ENCODE measurements at regions of chr16 and their contacts with region 1.

Region 1: DNA sequence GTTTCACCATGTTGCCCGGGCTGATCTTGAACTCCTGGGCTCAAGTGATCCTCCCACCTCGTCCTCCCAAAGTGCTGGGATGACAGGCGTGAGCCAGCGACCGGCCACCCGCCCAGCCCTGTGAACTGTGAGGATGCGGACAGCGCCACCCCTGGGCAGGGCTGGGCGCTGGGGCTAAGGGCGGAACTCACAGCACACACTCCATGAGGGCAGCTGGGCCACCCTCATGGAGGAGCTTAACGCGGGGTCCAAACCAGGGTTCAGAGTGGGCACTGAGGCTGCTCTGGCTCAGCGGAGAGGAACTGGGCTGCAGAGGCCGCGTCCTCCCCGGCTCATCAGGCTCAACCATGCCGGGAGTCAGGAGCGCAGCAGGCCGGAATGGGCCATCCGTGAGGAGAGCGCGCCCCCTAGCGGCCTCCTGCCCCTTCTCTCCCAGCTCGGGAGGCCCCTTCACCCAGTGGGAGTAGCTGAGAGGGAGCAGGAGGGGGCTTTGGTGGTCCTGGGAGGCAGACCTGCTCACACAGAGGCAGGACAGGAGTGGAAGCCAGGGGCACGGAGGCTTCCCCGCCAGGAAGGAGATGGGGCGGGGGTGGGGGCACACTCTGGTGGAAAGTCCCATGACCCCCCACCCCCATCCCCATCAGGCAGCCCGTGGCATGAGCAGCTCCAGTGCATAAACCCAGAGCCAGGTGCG is 13.8 kb downstream of the CORO7 start:
- DNase-seq: peak in 1 of 2 experiments; percentile 97
- H3K4me3 ChIP-seq: no peak overlapping the region
- H3K27ac ChIP-seq: no peak overlapping the region
- H3K4me1 ChIP-seq: peaks cover 0 to 4% (median 2%) of the 10 kb centered on the region in 4 experiments; a peak in 3 of 7 replicates
- H3K27me3 ChIP-seq: no peaks in the 10 kb centered on the region
- CTCF ChIP-seq: peak; percentile 91 to 97 (median 91)
- EP300 ChIP-seq: no peak
- POLR2A ChIP-seq: no peak
- RAD21 ChIP-seq: peak; percentile 97 to 98

Region 2: DNA sequence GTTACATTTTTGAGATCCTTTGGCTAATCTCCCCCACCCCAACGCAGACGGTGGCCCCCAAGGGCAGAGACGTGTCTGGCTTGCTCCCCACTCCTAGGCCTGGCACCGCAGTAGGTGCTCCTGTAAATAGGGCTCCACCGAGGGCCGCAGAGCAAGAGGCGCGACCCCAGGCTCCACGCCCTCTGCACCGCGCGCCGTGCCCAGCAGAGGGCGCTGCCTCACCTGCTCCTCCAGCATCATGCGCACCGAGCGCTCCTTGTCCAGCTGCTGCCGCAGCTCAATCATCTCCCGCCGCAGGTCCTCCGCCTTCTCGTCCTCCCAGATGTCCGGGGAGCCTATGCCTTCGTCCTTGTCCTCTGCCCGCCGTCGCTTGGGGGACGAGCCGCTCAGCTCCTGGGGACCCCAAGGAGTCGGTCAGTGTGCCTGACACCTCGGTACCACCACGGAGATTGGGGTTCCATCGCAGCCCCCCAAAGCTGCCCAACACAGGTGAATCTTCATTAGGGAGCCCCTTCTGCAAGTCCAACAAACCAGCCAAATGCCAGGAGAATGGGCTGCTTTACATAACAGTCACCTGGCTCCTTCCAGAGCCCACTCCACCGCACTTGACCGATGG is 140.9 kb before region 1 on chr16:
- CTCF ChIA-PET with region 1: interaction called, 52 read pairs
- POLR2A ChIA-PET with region 1: no interaction called
- DNase-seq: peak in 1 of 2 experiments; percentile 95
- H3K4me3 ChIP-seq: no peak overlapping the region
- H3K27ac ChIP-seq: no peak overlapping the region
- H3K4me1 ChIP-seq: peaks cover 0 to 11% (median 8%) of the 10 kb centered on the region in 4 experiments; a peak in 5 of 7 replicates
- H3K27me3 ChIP-seq: no peaks in the 10 kb centered on the region
- CTCF ChIP-seq: peak; percentile 86 to 98 (median 97)
- EP300 ChIP-seq: no peak
- POLR2A ChIP-seq: no peak
- RAD21 ChIP-seq: peak; percentile 80 to 83

Region 3: DNA sequence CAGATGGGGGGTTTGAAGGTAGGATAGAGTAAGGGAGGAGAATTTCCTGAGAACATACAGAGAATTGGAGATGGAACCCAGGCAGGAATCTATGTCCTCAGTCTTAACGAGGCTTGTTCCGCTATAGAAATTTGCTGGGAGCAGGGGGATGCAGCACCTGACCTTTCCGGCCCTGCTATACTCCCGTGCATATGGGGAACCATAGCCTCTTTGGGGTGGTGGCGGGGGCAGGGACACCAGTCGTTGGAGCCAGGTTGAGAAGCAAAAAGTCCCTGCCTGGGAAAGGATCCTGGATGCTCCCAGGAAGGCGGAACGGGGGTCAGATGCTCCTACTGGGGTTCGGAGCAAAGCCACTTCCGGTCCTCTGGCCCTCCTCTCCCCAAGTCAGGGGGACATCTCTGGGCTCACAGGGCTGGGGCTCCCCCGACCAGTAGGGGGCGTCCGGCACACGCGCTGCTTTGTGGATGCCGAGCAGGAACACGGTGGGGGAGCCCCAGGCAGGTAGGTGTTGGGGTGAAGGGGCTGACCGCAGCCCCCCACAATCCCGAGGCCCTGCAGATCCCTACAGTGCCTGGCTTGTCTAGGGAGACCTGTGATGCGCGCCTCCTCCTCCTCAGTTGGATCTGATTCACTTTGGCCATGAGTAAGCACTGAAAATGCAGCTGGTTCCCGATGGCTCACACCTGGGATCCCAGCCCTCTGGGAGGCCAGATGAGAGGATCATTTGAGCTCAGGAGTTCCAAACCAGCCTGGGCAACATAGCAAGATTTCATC is 114.3 kb before region 1 on chr16:
- CTCF ChIA-PET with region 1: interaction called, 43 read pairs
- POLR2A ChIA-PET with region 1: interaction called, 3 read pairs
- DNase-seq: peak in 1 of 2 experiments; percentile 98
- H3K4me3 ChIP-seq: peak overlapping the region in 2 of 4 experiments; percentile 2 to 16; a peak in 2 of 8 replicates
- H3K27ac ChIP-seq: peak overlapping the region; percentile 38; the same call in 1 of the 2 replicates
- H3K4me1 ChIP-seq: peaks cover 3 to 17% (median 8%) of the 10 kb centered on the region in 4 experiments
- H3K27me3 ChIP-seq: no peaks in the 10 kb centered on the region
- CTCF ChIP-seq: peak; percentile 94 to 98 (median 98)
- EP300 ChIP-seq: no peak
- POLR2A ChIP-seq: no peak
- RAD21 ChIP-seq: peak; percentile 84 to 93

Region 4: GRCh38 chr16:4307215-4308037 is 95.2 kb before region 1 on chr16:
- CTCF ChIA-PET with region 1: interaction called, 50 read pairs
- POLR2A ChIA-PET with region 1: interaction called, 5 read pairs
- DNase-seq: peak; percentile 90 to 94
- H3K4me3 ChIP-seq: peak overlapping the region; percentile 64 to 84 (median 80)
- H3K27ac ChIP-seq: peak overlapping the region; percentile 46; the same call in 1 of the 2 replicates
- H3K4me1 ChIP-seq: peaks cover 0 to 20% (median 13%) of the 10 kb centered on the region in 4 experiments; a peak in 6 of 7 replicates
- H3K27me3 ChIP-seq: no peaks in the 10 kb centered on the region
- CTCF ChIP-seq: no peak
- EP300 ChIP-seq: peak in 1 of 2 experiments; percentile 17; a peak in 1 of 3 replicates
- POLR2A ChIP-seq: no peak
- RAD21 ChIP-seq: no peak

Region 5: GRCh38 chr16:4330277-4330874 is 72.2 kb before region 1 on chr16:
- CTCF ChIA-PET with region 1: interaction called, 211 read pairs
- POLR2A ChIA-PET with region 1: no interaction called
- DNase-seq: peak in 1 of 2 experiments; percentile 91
- H3K4me3 ChIP-seq: no peak overlapping the region
- H3K27ac ChIP-seq: no peak overlapping the region
- H3K4me1 ChIP-seq: peaks cover 5 to 14% (median 10%) of the 10 kb centered on the region in 4 experiments
- H3K27me3 ChIP-seq: no peaks in the 10 kb centered on the region
- CTCF ChIP-seq: peak; percentile 84 to 98 (median 97)
- EP300 ChIP-seq: no peak
- POLR2A ChIP-seq: no peak
- RAD21 ChIP-seq: peak; percentile 86 to 94

Region 6: GRCh38 chr16:4371357-4372000 is 31.1 kb before region 1 on chr16 and contains the start of gene VASN:
- CTCF ChIA-PET with region 1: interaction called, 659 read pairs
- POLR2A ChIA-PET with region 1: interaction called, 48 read pairs
- DNase-seq: peak in 1 of 2 experiments; percentile 93
- H3K4me3 ChIP-seq: peak within 1 kb of the TSS; percentile 54 to 78 (median 59)
- H3K27ac ChIP-seq: no peak within 1 kb of the TSS
- H3K4me1 ChIP-seq: peaks cover 4 to 40% (median 34%) of the 10 kb centered on the region in 4 experiments
- H3K27me3 ChIP-seq: peaks cover 0 to 3% (median under 1%) of the 10 kb centered on the region in 4 experiments; a peak in 2 of 7 replicates
- CTCF ChIP-seq: no peak
- EP300 ChIP-seq: no peak
- POLR2A ChIP-seq: peak in 1 of 2 experiments; percentile 97; a peak in 2 of 3 replicates
- RAD21 ChIP-seq: no peak
- total RNA-seq, gene VASN: 9.6 and 10.1 TPM in 2 replicates

Region 7: GRCh38 chr16:4425378-4426020 is 22.9 kb after region 1 on chr16 and contains the start of gene DNAJA3:
- CTCF ChIA-PET with region 1: interaction called, 134 read pairs
- POLR2A ChIA-PET with region 1: interaction called, 4 read pairs
- DNase-seq: peak; percentile 74 to 95
- H3K4me3 ChIP-seq: peak within 1 kb of the TSS; percentile 73 to 98 (median 86)
- H3K27ac ChIP-seq: peak within 1 kb of the TSS; percentile 99
- H3K4me1 ChIP-seq: peaks cover 0 to 5% (median 2%) of the 10 kb centered on the region in 4 experiments; a peak in 3 of 7 replicates
- H3K27me3 ChIP-seq: no peaks in the 10 kb centered on the region
- CTCF ChIP-seq: no peak
- EP300 ChIP-seq: no peak
- POLR2A ChIP-seq: peak; percentile 86 to 93
- RAD21 ChIP-seq: no peak
- total RNA-seq, gene DNAJA3: 58.0 and 59.1 TPM in 2 replicates

Region 8: DNA sequence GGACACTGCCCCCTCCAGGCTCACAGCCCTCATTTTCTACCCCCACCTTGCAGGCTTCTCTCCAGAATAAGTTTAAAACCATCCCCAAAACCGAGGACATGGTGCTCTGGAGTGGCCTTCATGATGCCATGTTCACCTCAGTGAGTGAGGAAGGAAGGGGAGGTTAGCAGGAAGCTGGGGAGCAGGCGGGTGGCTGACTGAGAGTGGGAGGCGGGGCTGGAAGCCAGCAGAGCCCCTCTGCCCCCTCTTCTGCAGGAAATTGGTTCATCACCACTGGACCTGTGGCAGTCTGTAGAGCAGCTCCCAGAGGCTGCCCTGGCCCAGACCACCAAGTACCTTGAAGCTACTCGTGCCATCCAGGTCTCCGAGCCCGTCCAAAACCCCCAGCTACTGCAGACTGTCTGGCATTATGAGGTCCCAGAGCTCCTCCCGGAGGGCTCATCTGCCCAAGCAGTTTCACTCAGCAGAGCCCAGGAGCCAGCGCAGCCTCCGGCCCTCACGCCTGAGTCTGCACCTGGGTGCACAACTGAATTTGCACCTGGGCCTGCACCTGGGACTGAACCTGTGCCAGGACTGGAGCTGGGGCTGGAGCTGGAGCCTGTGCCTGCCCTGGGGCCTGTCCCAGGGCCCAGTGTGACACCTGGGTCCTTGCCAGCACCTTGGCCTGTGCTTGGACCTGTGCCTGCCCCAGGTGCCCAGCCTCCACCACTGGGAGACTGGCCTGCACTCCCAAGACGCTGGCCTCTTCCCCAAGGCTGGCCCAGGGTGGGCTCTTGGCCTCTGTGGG is 172.5 kb after region 1 on chr16:
- CTCF ChIA-PET with region 1: no interaction called
- POLR2A ChIA-PET with region 1: no interaction called
- DNase-seq: peak; percentile 49 to 53
- H3K4me3 ChIP-seq: no peak overlapping the region
- H3K27ac ChIP-seq: no peak overlapping the region
- H3K4me1 ChIP-seq: peaks cover 7 to 11% (median 7%) of the 10 kb centered on the region in 4 experiments
- H3K27me3 ChIP-seq: no peaks in the 10 kb centered on the region
- CTCF ChIP-seq: peak; percentile 63 to 78 (median 70)
- EP300 ChIP-seq: no peak
- POLR2A ChIP-seq: no peak
- RAD21 ChIP-seq: peak; percentile 86 to 93

Measured in H1 (cell line).